ENCODE measurements at regions of chr18 and their contacts with region 1.

Region 1: DNA sequence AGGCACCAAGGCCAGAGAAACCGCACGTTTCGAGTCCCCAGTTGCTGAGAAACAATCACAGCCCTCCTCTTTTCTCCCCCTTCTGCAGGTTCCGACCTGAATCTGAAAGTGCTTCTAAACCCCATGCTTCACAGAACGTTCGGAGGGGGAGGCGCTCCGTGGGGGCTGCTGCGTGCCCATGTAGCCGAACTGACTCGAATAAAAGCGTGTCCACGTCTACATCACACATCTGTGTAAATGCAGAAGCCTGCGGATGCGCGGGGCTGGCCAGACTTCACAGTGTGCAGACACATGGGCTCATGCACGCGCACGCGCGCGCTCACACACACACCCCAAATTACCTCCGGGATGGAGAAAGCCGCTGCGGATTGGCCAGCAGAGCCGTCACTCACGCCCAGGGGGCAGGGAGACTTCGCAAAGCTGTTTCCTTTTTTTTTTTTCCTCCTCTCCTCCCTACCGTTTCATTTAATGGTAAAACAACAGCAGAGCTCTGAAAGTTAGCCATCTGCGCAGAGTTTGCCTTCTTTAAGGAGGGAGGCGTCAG is 2.3 kb downstream of the ZNF516 start:
- DNase-seq: peak; percentile 100
- ATAC-seq: peak; percentile 91 to 96 (median 95)
- H3K4me3 ChIP-seq: peak overlapping the region; percentile 62 to 86 (median 78)
- H3K27ac ChIP-seq: peak overlapping the region; percentile 25 to 92 (median 84)
- H3K4me1 ChIP-seq: peaks cover 0 to 51% (median 31%) of the 10 kb centered on the region in 12 donors
- H3K27me3 ChIP-seq: no peaks in the 10 kb centered on the region
- CTCF ChIP-seq: no peak
- POLR2A ChIP-seq: no peak

Region 2: DNA sequence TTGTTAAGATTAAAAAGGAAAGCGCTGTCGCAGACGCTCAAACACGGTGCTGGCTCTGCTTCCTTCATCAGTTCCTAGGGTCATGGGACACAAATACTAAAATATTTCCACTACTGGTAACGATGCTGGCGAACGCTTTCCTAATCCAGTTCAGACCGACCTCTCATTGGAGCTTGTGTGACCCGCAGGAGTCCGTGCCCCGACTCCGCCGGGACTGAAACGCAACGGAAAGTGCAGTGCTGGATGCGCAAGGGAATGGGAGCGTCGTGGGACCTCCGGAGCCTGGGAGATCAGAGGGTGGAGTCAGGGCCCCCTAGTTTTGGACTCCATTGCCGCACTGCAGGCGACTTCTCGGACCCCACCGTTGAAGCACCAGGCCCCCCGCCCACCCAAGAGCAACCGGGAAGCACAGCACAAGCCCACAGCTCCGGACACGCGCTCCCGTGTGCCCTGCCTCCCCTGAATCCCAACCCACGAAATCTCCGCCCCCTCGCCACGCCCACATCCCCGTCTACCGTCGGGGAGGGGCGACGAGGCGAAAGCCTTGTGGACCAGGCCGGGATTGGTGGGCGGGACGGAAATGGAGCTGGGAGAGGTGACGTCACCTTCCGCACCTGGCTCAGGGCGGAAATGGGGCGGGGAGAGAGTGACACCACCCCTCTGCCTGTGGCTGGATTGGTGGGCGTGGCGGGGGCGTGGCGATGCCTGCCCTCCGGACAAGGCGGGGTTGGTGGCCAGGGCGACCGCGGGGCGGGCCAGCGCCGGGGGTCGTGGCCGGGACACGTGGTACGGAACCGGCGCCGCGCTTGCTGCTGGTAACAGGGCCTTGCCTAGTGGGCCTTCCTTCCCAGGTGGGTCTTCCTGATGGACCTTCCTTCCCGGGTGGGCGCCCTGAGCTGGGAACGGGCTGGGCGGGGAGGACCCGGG is 1996.9 kb before region 1 on chr18 and contains the start of gene CNDP2:
- intact Hi-C with region 1: loop called in 1 of 10 experiments (anchors 5 kb)
- DNase-seq: peak; percentile 100
- ATAC-seq: peak; percentile 96 to 97 (median 96)
- H3K4me3 ChIP-seq: peak within 1 kb of the TSS; percentile 64 to 99 (median 90)
- H3K27ac ChIP-seq: peak within 1 kb of the TSS; percentile 79 to 97 (median 94)
- H3K4me1 ChIP-seq: peaks cover 0 to 42% (median 25%) of the 10 kb centered on the region in 12 donors
- H3K27me3 ChIP-seq: no peaks in the 10 kb centered on the region
- CTCF ChIP-seq: no peak
- POLR2A ChIP-seq: peak in 1 of 2 donors; percentile 81
- total RNA-seq, gene CNDP2: 38.3 to 162 (median 76.3) TPM

Region 3: DNA sequence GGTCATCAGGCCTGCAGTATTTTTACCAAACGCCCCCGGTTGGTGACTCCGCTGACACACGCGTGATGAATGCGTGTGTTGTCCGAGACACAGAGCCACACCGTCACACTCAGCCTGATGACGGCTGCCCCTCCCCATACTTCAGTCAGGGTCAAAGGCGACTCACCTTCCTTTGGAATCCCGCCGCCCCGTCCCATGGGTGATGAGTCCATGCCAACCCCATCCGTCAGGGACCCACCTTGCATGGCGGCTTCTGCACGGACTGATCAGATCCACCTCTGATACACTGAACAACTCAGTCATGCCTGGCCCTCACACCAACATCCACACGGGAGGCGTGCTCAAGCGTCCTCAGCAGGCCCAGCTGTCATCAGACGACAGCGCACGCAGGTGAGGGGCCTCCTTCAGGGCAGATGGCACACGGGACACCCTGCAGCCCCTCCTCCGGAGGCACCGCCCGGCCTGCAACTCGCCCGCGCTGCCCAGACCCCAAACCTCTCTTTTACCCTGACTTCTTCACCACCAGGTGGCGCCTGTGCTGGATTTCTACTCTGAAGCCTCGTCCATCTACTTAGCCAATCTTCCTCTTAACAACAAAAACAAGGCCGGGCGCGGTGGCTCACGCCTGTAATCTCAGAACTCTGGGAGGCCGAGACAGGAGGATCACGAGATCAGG is 86.9 kb before region 1 on chr18:
- intact Hi-C with region 1: loop called in 3 of 10 experiments (anchors 5 to 10 kb)
- DNase-seq: peak in 2 of 5 donors; percentile 56 to 71
- ATAC-seq: peak in 2 of 4 donors; percentile 36 to 61
- H3K4me3 ChIP-seq: no peak overlapping the region
- H3K27ac ChIP-seq: no peak overlapping the region
- H3K4me1 ChIP-seq: peaks cover 0 to 33% (median 2%) of the 10 kb centered on the region in 12 donors
- H3K27me3 ChIP-seq: no peaks in the 10 kb centered on the region
- CTCF ChIP-seq: peak; percentile 14 to 61 (median 48)
- POLR2A ChIP-seq: no peak

Region 4: DNA sequence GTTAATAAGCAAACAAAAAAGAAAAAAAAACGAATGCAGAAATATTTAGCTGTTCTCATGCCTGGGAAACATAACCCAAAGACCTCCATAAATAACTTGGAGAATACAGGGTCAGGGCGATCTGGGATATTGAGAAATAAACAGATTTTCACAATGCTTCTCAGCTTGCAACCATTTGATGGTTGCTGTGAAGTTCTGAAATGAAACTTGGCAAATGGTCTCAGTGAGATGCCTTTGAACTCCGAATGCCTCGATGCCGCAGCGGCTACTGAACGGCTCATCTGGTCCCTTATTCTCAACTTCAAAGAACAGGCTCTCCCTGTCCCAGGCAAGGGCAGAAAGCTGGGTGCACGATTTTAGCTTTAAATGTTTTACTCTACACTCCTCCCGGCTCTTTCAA is 75.8 kb before region 1 on chr18:
- intact Hi-C with region 1: loop called in 2 of 10 experiments (anchors 5 to 10 kb)
- DNase-seq: no peak
- ATAC-seq: no peak
- H3K4me3 ChIP-seq: peak overlapping the region in 3 of 12 donors; percentile 4 to 23 (median 10)
- H3K27ac ChIP-seq: no peak overlapping the region
- H3K4me1 ChIP-seq: peaks cover 0 to 38% (median 13%) of the 10 kb centered on the region in 12 donors
- H3K27me3 ChIP-seq: no peaks in the 10 kb centered on the region
- CTCF ChIP-seq: no peak
- POLR2A ChIP-seq: no peak

Region 5: DNA sequence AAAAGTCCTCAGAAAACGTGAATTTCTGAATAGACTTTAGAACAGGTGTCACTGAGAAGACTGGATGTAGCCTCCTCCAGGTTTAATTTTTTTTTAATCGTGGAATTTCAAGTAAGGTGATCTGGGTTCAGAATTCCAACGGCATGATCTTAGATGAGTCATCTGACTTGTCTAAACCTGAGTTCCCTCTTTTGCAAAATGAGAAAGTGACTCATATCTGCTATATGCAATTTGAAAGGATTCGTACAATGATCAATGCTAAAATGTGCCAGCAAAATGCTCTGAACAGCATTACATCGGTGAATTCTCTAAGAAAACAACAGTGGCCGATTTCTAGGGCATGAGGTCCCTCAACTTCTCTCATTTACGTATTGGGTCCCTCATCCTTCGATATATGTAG is 71.4 kb after region 1 on chr18:
- intact Hi-C with region 1: loop called in 1 of 10 experiments (anchors 5 kb)
- DNase-seq: no peak
- ATAC-seq: no peak
- H3K4me3 ChIP-seq: no peak overlapping the region
- H3K27ac ChIP-seq: peak overlapping the region in 7 of 12 donors; percentile 18 to 78 (median 59)
- H3K4me1 ChIP-seq: peaks cover 0 to 40% (median 0%) of the 10 kb centered on the region in 12 donors
- H3K27me3 ChIP-seq: no peaks in the 10 kb centered on the region
- CTCF ChIP-seq: no peak
- POLR2A ChIP-seq: no peak

Region 6: DNA sequence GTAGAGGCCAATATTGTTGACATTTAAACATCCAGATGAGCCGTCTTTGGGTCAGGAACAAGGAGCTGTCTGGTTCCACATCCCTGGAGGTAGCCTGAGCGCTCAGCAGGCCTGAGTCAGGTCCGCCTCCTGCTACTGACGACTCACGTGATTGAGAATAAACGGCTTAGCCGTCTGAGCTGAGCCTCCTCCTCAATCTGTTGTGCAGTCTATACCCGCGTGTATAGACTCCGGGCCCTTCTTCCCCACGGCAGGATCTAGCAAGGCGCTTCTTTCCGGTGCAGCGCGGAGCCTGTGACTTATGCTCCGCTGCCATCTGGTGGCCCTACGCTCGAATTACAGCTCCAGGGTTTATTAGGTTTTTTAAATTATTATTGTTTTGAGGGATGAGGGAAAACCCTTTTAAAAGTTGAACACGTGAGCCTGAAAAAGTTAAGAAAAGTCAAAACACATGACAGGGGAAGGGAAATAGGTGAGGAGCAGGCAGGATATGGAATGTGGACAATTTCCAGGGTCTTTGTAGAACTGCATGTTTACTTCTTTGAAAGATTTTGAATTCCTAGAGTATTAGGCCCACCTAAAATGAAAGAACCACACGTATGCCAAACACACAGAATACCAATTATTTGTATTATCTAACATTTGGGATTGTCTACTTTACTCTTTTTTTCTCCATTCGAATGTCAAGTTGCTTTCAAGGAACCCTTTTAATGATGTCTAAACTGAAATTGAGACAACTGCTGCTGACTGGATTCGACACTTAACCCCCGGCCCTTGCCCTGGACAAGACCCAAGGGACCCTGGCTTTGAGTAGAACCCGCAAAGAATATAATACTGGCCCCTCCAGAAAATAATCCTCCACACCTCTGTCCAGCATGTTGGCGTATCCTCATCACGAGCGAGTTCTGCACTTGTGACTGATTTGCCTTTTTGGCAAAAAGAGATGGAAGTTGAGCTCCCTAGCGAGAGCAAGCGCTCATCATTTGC is 217.2 kb after region 1 on chr18:
- intact Hi-C with region 1: loop called in 1 of 10 experiments (anchors 5 kb)
- DNase-seq: peak; percentile 41 to 79 (median 64)
- ATAC-seq: peak; percentile 61 to 91 (median 83)
- H3K4me3 ChIP-seq: peak overlapping the region in 2 of 12 donors; percentile 7 to 22
- H3K27ac ChIP-seq: no peak overlapping the region
- H3K4me1 ChIP-seq: peaks cover 0 to 7% (median 0%) of the 10 kb centered on the region in 12 donors
- H3K27me3 ChIP-seq: no peaks in the 10 kb centered on the region
- CTCF ChIP-seq: peak; percentile 84 to 94 (median 90)
- POLR2A ChIP-seq: no peak